ENCODE measurements at regions of chr6 and their contacts with region 1.

Region 1: GRCh38 chr6:167907837-167908681 is 81.3 kb downstream of the AFDN start:
- DNase-seq: peak; percentile 45
- H3K4me3 Mint-ChIP-seq: no peak overlapping the region
- H3K27ac Mint-ChIP-seq: no peak overlapping the region
- H3K4me1 Mint-ChIP-seq: peaks cover 11% of the 10 kb centered on the region
- H3K27me3 Mint-ChIP-seq: no peaks in the 10 kb centered on the region
- CTCF ChIP-seq: peak; percentile 25

Region 2: GRCh38 chr6:168117942-168118341 is 209.9 kb after region 1 on chr6:
- CTCF ChIA-PET with region 1: interaction called, 8 read pairs
- POLR2A ChIA-PET with region 1: no interaction called
- intact Hi-C with region 1: loop called (anchors 1 kb)
- DNase-seq: no peak
- H3K4me3 Mint-ChIP-seq: no peak overlapping the region
- H3K27ac Mint-ChIP-seq: no peak overlapping the region
- H3K4me1 Mint-ChIP-seq: no peaks in the 10 kb centered on the region
- H3K27me3 Mint-ChIP-seq: no peaks in the 10 kb centered on the region
- CTCF ChIP-seq: no peak

Region 3: DNA sequence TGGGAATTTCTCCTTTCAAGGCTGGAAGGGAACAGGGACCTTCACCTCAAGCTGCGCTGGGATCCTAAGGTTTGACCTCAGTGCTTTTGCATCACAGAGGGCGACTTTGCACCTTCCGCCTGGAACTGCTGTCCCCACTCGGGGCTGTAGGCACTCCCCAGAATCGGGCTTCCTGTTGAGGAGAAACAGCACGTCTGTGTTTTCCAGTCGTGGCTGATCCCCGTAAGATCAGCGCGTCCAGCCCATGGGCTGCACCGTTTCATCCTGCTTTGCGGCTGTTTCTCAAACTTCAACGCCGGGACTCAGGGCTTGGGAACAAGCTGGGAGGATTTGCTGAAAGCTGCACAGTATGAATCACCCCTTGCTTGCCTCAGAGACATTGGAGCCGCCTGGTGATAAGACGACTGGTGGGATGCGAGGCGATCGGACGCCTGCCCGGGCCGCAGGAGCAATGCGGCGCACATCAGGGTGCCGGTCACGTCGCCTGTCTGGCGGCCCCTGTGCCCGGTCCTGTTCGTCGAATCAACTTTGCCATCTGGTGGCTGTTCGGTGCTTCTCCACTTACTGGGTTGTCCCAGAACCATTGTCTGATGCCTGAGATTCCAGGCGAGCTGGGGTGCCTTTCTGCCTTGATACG is 224.6 kb after region 1 on chr6:
- CTCF ChIA-PET with region 1: interaction called, 6 read pairs
- POLR2A ChIA-PET with region 1: no interaction called
- intact Hi-C with region 1: loop called (anchors 5 kb)
- DNase-seq: no peak
- H3K4me3 Mint-ChIP-seq: no peak overlapping the region
- H3K27ac Mint-ChIP-seq: no peak overlapping the region
- H3K4me1 Mint-ChIP-seq: peaks cover 6% of the 10 kb centered on the region
- H3K27me3 Mint-ChIP-seq: peaks cover 30% of the 10 kb centered on the region
- CTCF ChIP-seq: peak; percentile 7

Measured in MCF 10A (cell line).